ENCODE measurements at regions of chr5 and their contacts with region 1.

Region 1: GRCh38 chr5:14644623-14645237 is 19.8 kb upstream of the OTULIN start:
- DNase-seq: no peak

Region 2: GRCh38 chr5:13987843-13988464 is 656.8 kb before region 1 on chr5:
- intact Hi-C with region 1: loop called (anchors 5 kb)
- DNase-seq: peak; percentile 11 to 81 (median 56)

Region 3: DNA sequence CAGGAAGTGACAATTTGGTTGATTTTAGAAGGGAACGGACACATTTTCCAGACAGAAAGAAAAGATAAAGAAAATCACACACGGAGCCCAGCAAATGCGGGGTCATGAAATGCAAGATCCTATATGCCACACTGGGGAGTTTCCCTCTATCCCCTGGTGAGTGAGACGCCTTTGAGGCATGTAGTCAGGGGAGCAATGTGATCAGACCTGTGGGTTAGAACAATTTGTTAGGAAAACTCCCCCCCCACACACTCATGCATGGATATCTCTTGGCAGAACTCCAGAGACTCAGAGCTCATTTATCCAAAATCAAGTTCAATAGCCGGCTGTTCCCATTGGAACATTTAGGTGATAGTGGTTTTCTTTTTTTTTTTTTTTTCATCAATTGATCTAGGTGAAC is 573.3 kb before region 1 on chr5:
- intact Hi-C with region 1: no loop called
- DNase-seq: no peak

Region 4: GRCh38 chr5:14386884-14387624 is 257.7 kb before region 1 on chr5:
- intact Hi-C with region 1: no loop called
- DNase-seq: peak in 5 of 42 donors; percentile 13 to 43 (median 20)

Measured in head of caudate nucleus (tissue), 42 donors.